Right lobe of liver (tissue), 6 donors: ENCODE measurements at regions of chr10 and their contacts with region 1.

Region 1: DNA sequence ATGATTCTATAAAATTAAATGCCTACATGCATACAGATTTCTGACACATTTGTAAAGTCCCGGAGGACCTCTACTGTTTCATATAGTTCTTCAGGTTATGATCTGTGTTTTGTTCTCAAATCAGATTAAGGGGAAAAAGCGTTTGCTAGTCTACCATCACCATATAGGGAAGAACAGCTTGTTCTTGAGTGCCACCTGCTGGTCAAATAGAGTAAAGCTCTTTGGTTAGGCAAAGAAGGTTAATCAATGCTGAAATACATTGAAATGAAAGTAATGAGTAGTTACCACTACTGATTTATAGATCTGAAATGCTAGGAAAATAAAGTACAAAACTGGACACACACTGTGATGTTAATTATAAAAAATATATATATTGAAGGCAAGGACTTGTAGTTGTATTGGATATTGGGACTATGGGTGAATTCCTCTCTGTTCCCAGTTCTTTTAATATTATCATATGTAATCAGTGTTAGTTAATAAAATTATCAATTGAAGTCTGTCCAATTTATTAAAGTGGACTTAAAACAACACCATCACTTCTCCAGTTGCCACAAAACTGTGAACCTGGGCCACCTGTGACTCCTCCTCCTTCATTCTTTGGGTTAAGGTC is 72.6 kb upstream of the PDLIM1 start:
- DNase-seq: no peak
- ATAC-seq: peak; percentile 69 to 86 (median 74)
- H3K4me3 ChIP-seq: no peak overlapping the region
- H3K27ac ChIP-seq: no peak overlapping the region
- H3K4me1 ChIP-seq: peaks cover 0 to 3% (median 0%) of the 10 kb centered on the region in 4 donors
- H3K27me3 ChIP-seq: no peaks in the 10 kb centered on the region
- CTCF ChIP-seq: peak; percentile 88 to 95 (median 90)
- POLR2A ChIP-seq: no peak

Region 2: GRCh38 chr10:95246579-95247051 is 116.8 kb before region 1 on chr10:
- intact Hi-C with region 1: loop called (anchors 5 to 10 kb)
- DNase-seq: peak in 2 of 3 donors; percentile 55 to 70
- ATAC-seq: peak; percentile 68 to 72 (median 72)
- H3K4me3 ChIP-seq: no peak overlapping the region
- H3K27ac ChIP-seq: peak overlapping the region in 1 of 3 donors; percentile 41
- H3K4me1 ChIP-seq: peaks cover 0 to 14% (median 0%) of the 10 kb centered on the region in 4 donors
- H3K27me3 ChIP-seq: no peaks in the 10 kb centered on the region
- CTCF ChIP-seq: peak; percentile 69 to 84 (median 82)
- POLR2A ChIP-seq: no peak

Region 3: DNA sequence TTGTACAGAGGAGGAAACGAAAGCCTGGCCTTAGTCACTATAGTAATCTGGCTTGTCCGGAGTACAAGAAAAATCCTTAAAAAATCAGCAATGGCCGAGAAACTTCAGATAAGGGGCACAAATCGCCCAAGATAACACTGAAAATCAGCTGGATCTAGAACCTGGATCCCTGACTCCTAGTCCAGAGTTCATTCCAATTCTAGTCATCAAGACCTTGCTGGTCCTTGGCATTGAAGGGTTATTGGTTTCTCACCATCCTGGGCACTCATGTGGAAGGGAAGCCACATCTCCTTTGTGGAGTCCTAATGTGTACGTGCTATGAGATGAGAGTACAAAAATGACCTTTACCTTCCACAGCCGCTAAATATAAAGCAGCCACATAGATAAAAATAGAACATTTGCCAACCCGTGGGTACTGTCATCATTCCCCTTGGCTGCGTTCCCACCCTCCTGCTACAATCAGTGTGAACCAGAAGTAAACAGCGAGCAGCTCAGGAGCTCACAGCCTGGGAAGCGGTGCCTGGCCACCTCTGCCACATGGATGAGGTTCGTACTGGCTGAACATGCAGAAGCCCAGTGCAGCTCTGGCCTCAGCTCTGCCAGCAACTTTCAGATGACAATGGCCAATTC is 43.4 kb after region 1 on chr10:
- intact Hi-C with region 1: no loop called
- DNase-seq: peak; percentile 90 to 91 (median 90)
- ATAC-seq: peak; percentile 85 to 95 (median 94)
- H3K4me3 ChIP-seq: no peak overlapping the region
- H3K27ac ChIP-seq: peak overlapping the region; percentile 52 to 85 (median 75)
- H3K4me1 ChIP-seq: peaks cover 0 to 18% (median 7%) of the 10 kb centered on the region in 4 donors
- H3K27me3 ChIP-seq: no peaks in the 10 kb centered on the region
- CTCF ChIP-seq: no peak
- POLR2A ChIP-seq: no peak